Head of caudate nucleus (tissue), 42 donors: ENCODE measurements at regions of chr3 and their contacts with region 1.

Region 1: GRCh38 chr3:13495921-13496723 is 16.0 kb downstream of the HDAC11 start:
- DNase-seq: peak; percentile 51 to 94 (median 87)

Region 2: GRCh38 chr3:13419505-13420044 is 76.5 kb before region 1 on chr3:
- intact Hi-C with region 1: loop called (anchors 10 kb)
- DNase-seq: peak; percentile 39 to 90 (median 76)

Region 3: DNA sequence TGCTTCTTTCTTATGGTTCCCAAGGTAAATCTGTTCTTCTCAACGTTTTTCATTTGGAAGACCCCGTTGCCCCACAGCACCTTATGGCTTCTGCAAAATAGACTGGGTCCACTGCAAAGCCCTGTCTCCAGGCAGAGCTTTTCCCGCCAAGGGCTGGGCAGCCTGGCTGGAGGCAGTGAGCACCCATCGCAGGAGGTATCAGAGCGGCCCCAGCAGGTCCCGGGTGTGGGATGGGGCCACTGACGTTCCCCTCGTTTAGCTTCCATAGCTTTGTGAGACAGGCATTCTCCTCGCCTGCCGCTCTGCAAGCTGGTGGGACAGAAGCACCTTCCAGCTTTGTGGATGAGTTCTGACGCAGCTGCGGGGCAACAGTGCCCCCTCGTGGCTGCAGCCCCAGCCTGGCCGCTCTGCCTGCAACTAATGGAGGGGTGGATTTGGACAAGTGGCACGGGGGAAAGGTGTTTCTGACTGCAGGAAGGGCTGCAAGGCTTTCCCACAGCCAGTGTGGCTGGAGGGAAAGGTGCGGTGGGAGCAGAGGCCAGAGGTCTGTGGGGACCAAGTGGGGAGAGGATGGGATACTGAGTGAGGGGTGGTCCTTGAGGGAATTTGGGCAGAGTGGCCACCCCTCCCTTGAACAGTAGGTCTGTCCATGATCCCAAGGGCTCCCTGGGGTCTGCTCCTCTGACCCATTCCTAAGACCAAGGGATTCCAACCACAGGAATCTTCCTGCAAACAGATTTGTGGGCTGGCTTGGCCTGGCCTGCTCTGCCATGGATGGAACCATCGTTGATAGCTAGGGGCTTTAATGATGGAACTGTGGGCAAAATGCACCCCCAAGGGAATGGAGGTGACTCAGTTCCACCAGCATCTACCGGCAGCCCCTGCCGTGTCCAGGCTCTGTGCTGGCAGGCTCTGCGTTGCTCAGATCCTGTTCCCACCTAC is 152.2 kb after region 1 on chr3:
- intact Hi-C with region 1: loop called (anchors 2 kb)
- DNase-seq: peak; percentile 79 to 96 (median 90)